ENCODE measurements at regions of chr10 and their contacts with region 1.

Region 1: DNA sequence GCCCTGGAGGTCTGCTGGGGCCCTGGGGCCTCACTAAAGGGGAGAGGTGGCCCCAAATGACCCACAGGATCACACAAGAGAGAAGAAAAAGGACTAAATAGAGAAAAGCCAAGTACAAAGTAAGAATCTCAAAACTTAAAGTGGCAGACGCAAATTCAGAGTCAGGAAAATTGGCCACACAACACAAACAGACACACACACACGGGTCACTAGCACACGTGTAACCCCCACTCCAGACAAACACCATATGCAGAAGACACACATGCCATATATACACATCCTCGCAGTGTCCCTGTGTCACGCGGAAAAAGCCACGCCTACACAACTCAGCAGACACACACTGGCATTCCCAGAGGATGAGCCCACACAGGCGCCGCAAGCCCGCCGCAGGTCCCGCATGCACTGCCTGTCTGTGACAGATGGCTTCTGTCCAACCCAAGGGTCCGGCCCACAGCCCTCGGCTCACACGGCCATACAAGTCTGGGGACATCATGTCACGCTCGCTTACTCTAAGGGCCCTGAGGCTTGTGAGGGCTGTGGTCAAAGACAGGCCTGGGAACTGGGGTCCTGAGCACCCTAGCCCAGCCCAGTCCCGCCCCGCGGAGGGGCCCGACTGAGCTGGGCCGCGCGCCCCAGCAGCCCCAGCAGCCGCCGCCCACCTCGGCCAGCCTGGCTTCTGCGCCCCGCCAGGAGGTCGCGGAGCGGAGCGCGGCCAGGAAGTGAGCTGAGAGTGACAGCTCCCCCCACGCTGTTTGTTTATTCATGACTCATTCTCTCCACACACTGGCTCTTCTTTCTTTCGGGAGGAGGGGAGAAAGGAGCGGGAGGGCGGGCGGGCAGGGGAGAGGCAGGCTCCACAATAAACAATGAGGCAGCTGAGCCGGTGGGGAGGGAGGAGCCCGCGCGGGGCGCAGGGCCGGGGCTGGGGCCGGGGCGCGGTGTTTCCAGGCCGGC is 95.5 kb upstream of the ZMIZ1 start:
- DNase-seq: peak; percentile 70
- ATAC-seq: peak; percentile 82
- H3K4me3 ChIP-seq: peak overlapping the region; percentile 44 to 56
- H3K27ac ChIP-seq: peak overlapping the region; percentile 90
- H3K4me1 ChIP-seq: peaks cover 34% of the 10 kb centered on the region
- H3K27me3 ChIP-seq: no peaks in the 10 kb centered on the region
- CTCF ChIP-seq: no peak

Region 2: GRCh38 chr10:78664929-78665553 is 308.2 kb before region 1 on chr10:
- CTCF ChIA-PET with region 1: no interaction called
- POLR2A ChIA-PET with region 1: no interaction called
- in situ Hi-C with region 1: no loop called
- intact Hi-C with region 1: loop called (anchors 10 kb)
- DNase-seq: peak; percentile 30
- ATAC-seq: 0 out of 2 replicates have a peak, but pooled peaks have one; percentile 60
- H3K4me3 ChIP-seq: no peak overlapping the region
- H3K27ac ChIP-seq: no peak overlapping the region
- H3K4me1 ChIP-seq: no peaks in the 10 kb centered on the region
- H3K27me3 ChIP-seq: peaks cover 24% of the 10 kb centered on the region
- CTCF ChIP-seq: peak; percentile 79; the same call in 1 of the 2 replicates

Region 3: DNA sequence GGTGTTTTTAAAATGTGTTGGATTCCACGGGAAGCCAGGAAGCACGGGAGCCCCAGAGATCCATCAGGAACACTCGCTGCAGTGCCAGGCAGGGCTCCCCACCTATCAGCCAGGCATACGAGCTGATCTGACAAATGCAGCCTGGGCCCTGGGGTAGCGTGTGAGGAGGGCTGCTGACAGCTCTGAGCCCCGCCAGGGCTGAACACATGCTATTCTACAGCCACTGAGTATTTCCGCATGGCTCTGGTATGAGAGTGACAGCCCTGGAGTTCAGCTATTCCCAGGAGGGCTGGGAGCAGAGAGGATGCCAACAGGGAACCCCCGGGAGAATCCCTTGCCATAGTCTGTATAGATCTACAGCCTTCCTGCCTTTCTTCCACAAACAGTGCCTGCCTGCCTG is 141.8 kb before region 1 on chr10:
- CTCF ChIA-PET with region 1: no interaction called
- POLR2A ChIA-PET with region 1: no interaction called
- in situ Hi-C with region 1: no loop called
- intact Hi-C with region 1: no loop called
- DNase-seq: no peak
- ATAC-seq: no peak
- H3K4me3 ChIP-seq: no peak overlapping the region
- H3K27ac ChIP-seq: no peak overlapping the region
- H3K4me1 ChIP-seq: no peaks in the 10 kb centered on the region
- H3K27me3 ChIP-seq: peaks cover 7% of the 10 kb centered on the region; the same call in 1 of the 2 replicates
- CTCF ChIP-seq: no peak

Region 4: DNA sequence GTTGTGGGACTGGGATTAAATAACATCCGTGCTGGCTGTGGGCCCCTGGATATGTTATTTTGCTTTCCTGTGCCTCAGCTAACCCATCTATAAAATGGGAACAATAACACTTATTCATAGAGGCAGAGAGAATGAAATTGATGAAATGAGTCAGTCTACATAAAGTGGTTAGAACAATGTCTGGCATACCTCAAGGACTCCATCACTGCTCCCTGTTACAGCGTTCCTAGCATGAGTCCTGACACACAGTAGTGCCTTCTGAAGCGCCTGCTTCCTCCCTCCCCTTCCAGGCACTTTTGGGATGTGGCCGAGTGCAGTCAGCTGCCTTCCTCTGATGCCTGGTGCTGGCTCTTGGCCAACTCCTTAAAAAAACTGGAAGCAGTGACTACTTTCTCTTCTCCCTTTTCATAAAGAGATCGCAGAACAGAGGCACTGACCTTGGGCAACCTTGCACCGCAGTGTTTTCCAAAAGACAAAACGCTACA is 12.9 kb before region 1 on chr10:
- CTCF ChIA-PET with region 1: interaction called, 11 read pairs
- POLR2A ChIA-PET with region 1: interaction called, 14 read pairs
- in situ Hi-C with region 1: no loop called
- intact Hi-C with region 1: no loop called
- DNase-seq: no peak
- ATAC-seq: no peak
- H3K4me3 ChIP-seq: no peak overlapping the region
- H3K27ac ChIP-seq: no peak overlapping the region
- H3K4me1 ChIP-seq: peaks cover 27% of the 10 kb centered on the region
- H3K27me3 ChIP-seq: no peaks in the 10 kb centered on the region
- CTCF ChIP-seq: no peak

Region 5: GRCh38 chr10:79067241-79068202 is 94.3 kb after region 1 on chr10:
- CTCF ChIA-PET with region 1: interaction called, 7 read pairs
- POLR2A ChIA-PET with region 1: no interaction called
- in situ Hi-C with region 1: no loop called
- intact Hi-C with region 1: loop called (anchors 2 kb)
- DNase-seq: no peak
- ATAC-seq: no peak
- H3K4me3 ChIP-seq: peak overlapping the region; percentile 88 to 93
- H3K27ac ChIP-seq: peak overlapping the region; percentile 60
- H3K4me1 ChIP-seq: peaks cover 26% of the 10 kb centered on the region
- H3K27me3 ChIP-seq: no peaks in the 10 kb centered on the region
- CTCF ChIP-seq: no peak; the same call in 1 of the 2 replicates

Region 6: GRCh38 chr10:79270466-79271246 is 297.4 kb after region 1 on chr10:
- CTCF ChIA-PET with region 1: no interaction called
- POLR2A ChIA-PET with region 1: interaction called, 11 read pairs
- in situ Hi-C with region 1: no loop called
- intact Hi-C with region 1: no loop called
- DNase-seq: no peak
- ATAC-seq: no peak
- H3K4me3 ChIP-seq: no peak overlapping the region
- H3K27ac ChIP-seq: no peak overlapping the region
- H3K4me1 ChIP-seq: no peaks in the 10 kb centered on the region
- H3K27me3 ChIP-seq: no peaks in the 10 kb centered on the region
- CTCF ChIP-seq: no peak

Measured in Panc1 (cell line).